ENCODE measurements at regions of chr3 and their contacts with region 1.

Region 1: GRCh38 chr3:184513276-184514170 is 48.1 kb upstream of the EPHB3 start:
- DNase-seq: peak; percentile 75
- H3K4me3 Mint-ChIP-seq: peak overlapping the region; percentile 57
- H3K27ac Mint-ChIP-seq: no peak overlapping the region
- H3K4me1 Mint-ChIP-seq: peaks cover 12% of the 10 kb centered on the region
- H3K27me3 Mint-ChIP-seq: peaks cover 73% of the 10 kb centered on the region

Region 2: DNA sequence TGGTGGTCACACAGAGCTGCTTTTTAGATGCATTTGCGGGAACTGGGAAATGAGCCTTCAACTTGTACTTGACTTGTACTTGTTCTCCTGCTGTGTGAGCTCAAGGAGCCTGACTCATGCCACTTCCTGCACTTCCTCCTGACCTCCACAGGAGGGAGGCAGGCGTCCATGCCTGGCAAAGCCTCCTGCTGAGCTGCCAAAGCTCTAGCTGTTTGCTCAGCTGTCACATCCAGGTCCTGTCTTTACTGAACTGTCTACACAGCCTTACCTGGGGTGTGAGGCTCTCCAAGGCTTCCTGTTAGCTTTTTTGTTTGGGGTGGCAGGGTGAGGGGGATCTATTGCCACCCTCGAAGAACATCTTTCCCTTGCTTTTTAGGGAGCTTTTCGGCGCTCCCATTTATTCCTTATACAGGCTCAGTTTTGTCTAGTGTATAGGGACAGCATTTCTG is 141.9 kb before region 1 on chr3:
- intact Hi-C with region 1: loop called (anchors 1 kb)
- DNase-seq: peak; percentile 52
- H3K4me3 Mint-ChIP-seq: no peak overlapping the region
- H3K27ac Mint-ChIP-seq: no peak overlapping the region
- H3K4me1 Mint-ChIP-seq: peaks cover 12% of the 10 kb centered on the region
- H3K27me3 Mint-ChIP-seq: peaks cover 19% of the 10 kb centered on the region

Region 3: DNA sequence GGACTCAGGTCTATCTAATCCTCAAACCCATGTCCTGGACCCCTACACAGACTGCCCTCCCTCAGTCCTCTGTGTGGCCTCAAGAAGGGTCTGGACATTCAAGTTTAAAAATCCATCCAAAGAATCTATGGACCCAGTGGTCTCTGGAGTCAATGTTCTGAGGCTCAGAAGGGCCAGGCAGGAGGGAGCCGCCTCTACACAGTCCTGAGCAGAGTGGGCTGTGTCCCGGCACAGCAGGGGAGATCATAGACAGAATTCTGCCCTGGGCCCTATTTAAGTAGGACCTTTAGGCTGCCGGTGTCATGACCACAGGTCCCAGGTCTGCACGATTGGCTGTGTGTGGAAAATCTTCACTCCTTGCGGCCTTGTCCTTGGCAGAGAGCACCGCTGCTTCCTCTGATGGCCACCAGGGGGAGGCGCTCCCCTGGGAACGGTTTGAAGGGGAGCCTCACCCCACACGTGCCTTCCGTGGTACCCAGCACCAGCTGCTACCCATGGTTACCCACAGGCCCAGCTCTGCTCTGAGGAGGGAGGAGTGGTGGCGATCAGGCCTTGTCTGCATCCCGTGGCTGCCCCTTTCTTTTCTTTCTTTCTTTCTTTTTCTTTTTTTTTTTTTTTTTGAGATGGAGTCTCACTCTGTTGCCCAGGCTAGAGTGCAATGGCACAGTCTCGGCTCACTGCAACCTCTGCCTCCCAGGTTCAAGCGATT is 95.8 kb before region 1 on chr3:
- intact Hi-C with region 1: loop called (anchors 5 kb)
- DNase-seq: peak; percentile 53
- H3K4me3 Mint-ChIP-seq: no peak overlapping the region
- H3K27ac Mint-ChIP-seq: no peak overlapping the region
- H3K4me1 Mint-ChIP-seq: no peaks in the 10 kb centered on the region
- H3K27me3 Mint-ChIP-seq: peaks cover 6% of the 10 kb centered on the region

Region 4: DNA sequence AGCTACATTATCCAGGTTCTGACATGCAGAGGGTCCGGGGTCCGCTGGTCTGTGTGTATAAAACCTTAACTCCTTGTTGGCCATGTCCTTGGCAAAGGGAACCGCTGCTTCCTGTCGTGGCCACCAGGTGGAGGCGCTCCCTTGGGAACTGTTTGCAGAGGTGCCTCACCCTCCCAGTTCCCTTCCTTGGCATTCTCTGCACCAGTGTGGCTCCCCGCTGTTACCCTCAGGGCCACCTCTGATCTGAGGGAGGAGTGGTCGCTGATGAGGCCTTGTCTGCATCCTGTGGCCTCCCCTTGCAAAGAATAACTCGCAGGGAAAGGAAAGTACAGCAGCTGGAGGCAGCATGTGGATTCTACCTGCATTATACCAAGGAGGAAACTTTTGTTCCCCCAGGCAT is 44.1 kb before region 1 on chr3:
- intact Hi-C with region 1: loop called (anchors 1 kb)
- DNase-seq: no peak
- H3K4me3 Mint-ChIP-seq: no peak overlapping the region
- H3K27ac Mint-ChIP-seq: no peak overlapping the region
- H3K4me1 Mint-ChIP-seq: peaks cover 25% of the 10 kb centered on the region
- H3K27me3 Mint-ChIP-seq: peaks cover 10% of the 10 kb centered on the region

Region 5: DNA sequence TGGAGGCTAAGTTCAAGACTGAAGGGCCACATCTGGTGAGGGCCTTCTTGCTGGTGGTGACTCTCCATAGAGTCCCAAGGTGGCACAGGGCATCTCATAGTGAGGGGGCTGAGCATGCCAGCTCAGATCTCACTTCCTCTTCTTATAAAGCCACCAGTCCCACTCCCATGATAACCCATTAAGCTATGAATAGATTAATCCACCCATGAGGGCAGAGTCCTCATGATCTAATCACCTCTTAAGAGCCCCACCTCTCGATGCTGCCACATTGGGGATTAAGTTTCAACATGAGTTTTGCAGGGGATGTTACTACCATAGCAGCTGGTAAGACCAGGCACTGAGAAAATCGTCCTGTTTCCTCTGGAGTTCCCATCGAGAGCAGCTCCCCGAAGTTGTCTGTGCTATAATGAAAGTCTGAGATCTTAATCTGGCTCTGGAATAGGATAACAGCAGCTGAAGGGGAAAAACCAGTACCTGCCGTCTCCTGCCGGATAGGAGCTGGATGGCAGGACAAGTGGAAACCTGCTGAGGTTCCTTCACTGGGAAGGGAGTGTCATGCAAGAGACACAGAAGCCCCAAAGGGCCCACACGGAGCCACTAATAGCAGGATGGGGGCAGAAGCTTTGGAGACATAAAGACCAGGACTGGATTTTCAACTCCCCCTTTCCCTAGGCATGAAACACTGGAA is 31.4 kb before region 1 on chr3:
- intact Hi-C with region 1: no loop called
- DNase-seq: no peak
- H3K4me3 Mint-ChIP-seq: no peak overlapping the region
- H3K27ac Mint-ChIP-seq: no peak overlapping the region
- H3K4me1 Mint-ChIP-seq: no peaks in the 10 kb centered on the region
- H3K27me3 Mint-ChIP-seq: peaks cover 27% of the 10 kb centered on the region

Region 6: DNA sequence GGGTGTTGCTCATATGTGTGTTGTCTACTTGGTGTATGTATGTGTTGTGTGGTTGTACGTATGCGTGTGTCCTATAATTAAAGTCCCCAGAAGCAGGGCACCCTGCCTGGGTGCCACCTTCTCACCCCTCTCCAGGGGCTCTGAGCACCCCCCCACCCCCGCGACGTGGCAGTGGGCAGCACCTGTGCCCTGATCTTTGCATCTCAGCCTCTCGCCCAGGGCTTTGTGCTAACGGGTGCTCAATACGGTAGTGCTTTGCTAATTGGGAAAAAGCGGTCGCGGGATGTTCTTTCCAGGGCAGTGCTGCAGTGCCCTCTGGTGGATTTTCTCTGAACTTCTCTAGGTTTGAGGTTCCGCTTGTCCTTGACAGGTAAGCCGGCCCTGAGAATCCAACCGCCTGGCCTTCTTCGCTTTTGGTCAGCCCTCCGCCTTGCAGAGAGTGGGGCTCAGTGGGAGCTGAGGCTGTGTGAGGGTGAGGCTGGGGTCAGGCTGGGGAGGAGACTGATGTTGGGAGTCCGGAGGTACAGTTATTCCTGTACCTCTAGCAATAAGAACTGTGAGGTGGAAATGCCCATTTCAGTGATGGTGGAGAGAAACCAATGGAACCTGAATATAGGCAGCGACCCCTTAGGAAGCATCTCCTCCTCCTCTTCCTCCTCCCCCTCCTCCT is 30.5 kb after region 1 on chr3:
- intact Hi-C with region 1: loop called (anchors 1 kb)
- DNase-seq: peak; percentile 72
- H3K4me3 Mint-ChIP-seq: no peak overlapping the region
- H3K27ac Mint-ChIP-seq: no peak overlapping the region
- H3K4me1 Mint-ChIP-seq: peaks cover 2% of the 10 kb centered on the region
- H3K27me3 Mint-ChIP-seq: peaks cover 14% of the 10 kb centered on the region